ENCODE measurements at regions of chr9 and their contacts with region 1.

Region 1: GRCh38 chr9:7910426-7911020 is 110.9 kb upstream of the DMAC1 start:
- DNase-seq: no peak
- H3K4me3 Mint-ChIP-seq: no peak overlapping the region
- H3K27ac Mint-ChIP-seq: no peak overlapping the region
- H3K4me1 Mint-ChIP-seq: no peaks in the 10 kb centered on the region
- H3K27me3 Mint-ChIP-seq: peaks cover 3% of the 10 kb centered on the region

Region 2: GRCh38 chr9:6703898-6704639 is 1206.5 kb before region 1 on chr9:
- intact Hi-C with region 1: no loop called
- DNase-seq: peak; percentile 84
- H3K4me3 Mint-ChIP-seq: peak overlapping the region; percentile 89
- H3K27ac Mint-ChIP-seq: peak overlapping the region; percentile 91
- H3K4me1 Mint-ChIP-seq: peaks cover 14% of the 10 kb centered on the region
- H3K27me3 Mint-ChIP-seq: peaks cover 4% of the 10 kb centered on the region

Region 3: DNA sequence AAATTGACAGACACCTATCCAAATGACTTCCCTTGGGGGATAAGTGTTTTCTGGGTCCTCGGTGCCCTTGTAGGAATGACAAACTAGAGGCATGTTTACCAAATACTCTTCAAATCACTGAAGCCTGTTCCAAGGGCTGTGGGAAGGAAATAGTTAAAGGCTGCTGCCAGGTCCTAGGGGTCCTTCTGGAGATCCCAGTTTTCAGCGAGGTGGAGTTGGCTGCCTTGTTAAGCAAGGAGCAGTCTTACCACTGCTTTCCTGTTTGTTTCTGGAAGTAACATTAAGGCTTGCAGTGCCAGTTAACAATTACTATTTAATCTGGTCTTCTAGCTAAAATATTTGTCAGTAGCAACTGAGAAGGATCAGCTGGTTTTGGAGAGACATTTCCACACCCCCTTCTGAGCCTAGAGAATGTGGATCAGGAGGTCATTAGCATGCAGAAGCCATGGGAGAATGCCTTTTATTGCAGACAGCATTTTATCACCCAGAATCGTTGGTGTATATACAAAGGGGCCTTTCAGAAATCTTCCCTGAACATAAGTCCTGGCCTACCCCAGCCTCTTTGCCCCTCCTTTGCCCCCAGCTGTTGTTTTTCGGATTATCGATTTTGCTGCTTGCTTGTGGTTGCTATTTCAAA is 349.7 kb before region 1 on chr9:
- intact Hi-C with region 1: no loop called
- DNase-seq: no peak
- H3K4me3 Mint-ChIP-seq: no peak overlapping the region
- H3K27ac Mint-ChIP-seq: no peak overlapping the region
- H3K4me1 Mint-ChIP-seq: no peaks in the 10 kb centered on the region
- H3K27me3 Mint-ChIP-seq: peaks cover 15% of the 10 kb centered on the region

Region 4: DNA sequence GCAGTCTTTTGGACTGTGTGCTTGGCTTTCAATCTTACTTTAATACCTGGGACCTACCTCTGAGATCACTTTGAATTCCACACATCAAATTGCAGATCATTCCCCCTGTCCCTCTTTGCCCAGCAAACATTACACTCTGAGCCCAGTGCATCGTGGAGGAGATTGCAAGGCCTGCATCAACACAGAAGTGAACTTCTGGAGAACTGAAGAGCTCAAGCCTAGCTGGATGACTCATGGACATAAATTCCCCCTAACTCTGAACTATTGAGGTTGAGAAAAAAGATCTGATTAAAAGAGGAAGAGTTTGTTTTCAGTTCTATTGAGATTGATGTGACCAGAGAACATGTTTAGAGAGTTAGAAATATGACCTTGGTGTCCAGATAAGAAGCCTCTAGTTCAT is 205.0 kb after region 1 on chr9:
- intact Hi-C with region 1: loop called (anchors 5 kb)
- DNase-seq: no peak
- H3K4me3 Mint-ChIP-seq: no peak overlapping the region
- H3K27ac Mint-ChIP-seq: peak overlapping the region; percentile 49
- H3K4me1 Mint-ChIP-seq: peaks cover 11% of the 10 kb centered on the region
- H3K27me3 Mint-ChIP-seq: no peaks in the 10 kb centered on the region

Region 5: GRCh38 chr9:8234316-8234715 is 323.8 kb after region 1 on chr9:
- intact Hi-C with region 1: no loop called
- DNase-seq: no peak
- H3K4me3 Mint-ChIP-seq: no peak overlapping the region
- H3K27ac Mint-ChIP-seq: no peak overlapping the region
- H3K4me1 Mint-ChIP-seq: no peaks in the 10 kb centered on the region
- H3K27me3 Mint-ChIP-seq: no peaks in the 10 kb centered on the region

Measured in activated T-helper 1 cell treated with anti-CD3 and anti-CD28 coated beads, Interleukin-12 subunit alpha, Interleukin-12 subunit beta, Interleukin-2, Interleukin-4 antibody, amounts not matched to agents 30 ng/mL and 10 ng/mL and 1 ng/mL, durations not matched to agents 14 hours and 24 hours and 36 hours (primary cell).